GM18951 (cell line): ENCODE measurements at regions of chr9 and their contacts with region 1.

Region 1: GRCh38 chr9:116661037-116661954 is 25.8 kb upstream of the TRIM32 start:
- POLR2A ChIP-seq: no peak

Region 2: GRCh38 chr9:115591584-115591984 is 1069.7 kb before region 1 on chr9:
- in situ Hi-C with region 1: loop called (anchors 25 kb)
- POLR2A ChIP-seq: no peak

Region 3: GRCh38 chr9:116342071-116342470 is 319.2 kb before region 1 on chr9:
- in situ Hi-C with region 1: no loop called
- POLR2A ChIP-seq: no peak

Region 4: GRCh38 chr9:116966199-116966598 is 304.9 kb after region 1 on chr9:
- in situ Hi-C with region 1: no loop called
- POLR2A ChIP-seq: no peak